ENCODE measurements at regions of chr6 and their contacts with region 1.

Region 1: DNA sequence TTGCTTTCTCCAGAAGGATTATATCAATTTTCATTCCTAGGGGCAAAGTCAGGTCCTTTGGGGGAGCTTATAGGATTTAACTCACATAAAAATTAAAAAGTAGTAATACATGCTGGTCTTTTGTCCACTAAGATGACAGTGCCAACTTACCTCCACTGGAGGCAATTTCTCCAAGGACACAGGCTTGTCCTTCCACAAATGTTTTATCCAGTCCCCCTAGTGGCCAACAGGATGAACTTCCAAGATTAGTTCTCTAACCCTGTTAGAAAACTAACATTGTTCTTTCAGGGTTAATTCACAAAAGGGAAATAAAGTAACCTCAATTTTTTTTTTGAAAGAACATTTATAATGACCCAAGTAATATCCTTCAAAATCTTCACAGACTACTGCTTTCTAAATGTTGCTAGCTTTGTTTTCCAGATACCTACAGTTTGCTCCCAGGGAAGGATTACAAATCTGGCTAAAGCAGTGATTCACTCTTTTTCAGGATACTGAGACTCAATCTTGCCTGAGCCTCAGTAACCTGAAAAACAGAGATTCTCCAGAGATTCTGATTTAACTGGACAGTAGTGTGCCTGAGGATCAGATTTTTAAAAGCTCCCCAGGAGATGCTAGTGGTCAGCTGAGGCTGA is 31.7 kb upstream of the UBR2 start:
- H3K4me3 ChIP-seq: no peak overlapping the region
- H3K27ac ChIP-seq: no peak overlapping the region
- H3K4me1 ChIP-seq: no peaks in the 10 kb centered on the region
- CTCF ChIP-seq: peak; percentile 42; the same call in 1 of the 2 replicates

Region 2: GRCh38 chr6:42302411-42302810 is 229.7 kb before region 1 on chr6:
- CTCF ChIA-PET with region 1: interaction called, 10 read pairs
- POLR2A ChIA-PET with region 1: no interaction called
- H3K4me3 ChIP-seq: no peak overlapping the region
- H3K27ac ChIP-seq: no peak overlapping the region
- H3K4me1 ChIP-seq: no peaks in the 10 kb centered on the region
- CTCF ChIP-seq: no peak

Region 3: DNA sequence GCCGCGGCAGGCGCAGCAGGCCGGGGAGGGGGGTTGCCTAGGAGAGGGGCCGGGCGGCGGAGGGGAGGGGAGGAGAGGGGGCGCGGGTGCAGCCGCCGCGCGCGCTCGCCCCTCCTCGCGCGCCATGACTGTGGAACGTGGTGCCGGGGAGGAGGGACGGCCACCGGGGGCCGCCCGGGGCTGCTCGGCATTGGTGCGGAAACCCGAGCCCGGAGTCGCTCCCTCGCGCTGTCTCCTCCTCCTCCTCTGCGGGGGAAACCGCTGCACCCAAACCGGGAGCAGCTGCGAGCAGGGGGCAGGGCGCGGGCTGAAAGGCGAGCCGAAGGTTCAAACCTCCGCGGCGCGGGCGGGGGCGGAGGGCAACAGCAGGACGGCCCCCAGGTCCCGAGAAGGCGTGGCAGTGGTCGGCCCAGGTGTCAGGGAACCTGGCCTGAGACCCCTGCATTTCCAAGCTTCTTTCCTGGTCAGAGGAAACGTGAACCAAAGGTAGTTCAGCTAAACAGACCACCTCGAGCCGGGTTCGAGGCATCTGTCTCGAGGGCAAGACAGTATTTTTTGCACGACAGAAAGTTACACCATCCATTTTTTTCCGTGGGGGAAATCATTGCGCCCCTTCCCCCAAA is 79.0 kb before region 1 on chr6:
- CTCF ChIA-PET with region 1: interaction called, 11 read pairs
- POLR2A ChIA-PET with region 1: interaction called, 3 read pairs
- H3K4me3 ChIP-seq: peak overlapping the region; percentile 60
- H3K27ac ChIP-seq: peak overlapping the region; percentile 99
- H3K4me1 ChIP-seq: peaks cover 26% of the 10 kb centered on the region
- CTCF ChIP-seq: no peak

Region 4: DNA sequence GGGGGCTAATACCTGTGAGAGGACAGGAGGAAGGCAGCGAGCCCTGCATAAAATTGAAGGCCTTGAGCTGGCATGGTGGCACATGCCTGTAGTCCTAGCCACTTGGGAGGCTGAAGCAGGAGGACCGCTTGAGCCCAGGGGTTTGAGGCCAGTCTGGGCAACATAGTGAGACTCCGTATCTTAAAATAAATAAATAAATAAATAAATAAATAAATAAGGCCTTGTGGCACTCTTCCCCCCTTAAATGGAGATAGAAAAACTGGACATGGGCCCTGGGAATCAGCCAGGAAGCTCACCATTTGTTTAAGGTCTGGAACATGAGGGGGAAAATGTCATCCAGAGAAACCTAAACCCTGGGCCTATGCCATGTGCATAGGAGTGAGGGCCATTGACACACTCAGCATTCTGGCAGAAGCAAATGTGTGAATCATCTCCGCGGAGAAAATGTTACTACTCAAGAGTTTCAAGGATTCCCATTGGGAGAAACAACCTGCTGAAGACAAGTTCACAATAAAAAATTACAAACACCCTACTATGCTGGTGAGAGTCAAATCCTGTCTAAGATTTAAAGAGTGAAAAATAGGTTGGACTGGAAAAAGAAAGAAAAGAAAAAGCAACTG is 20.2 kb before region 1 on chr6:
- CTCF ChIA-PET with region 1: interaction called, 47 read pairs
- POLR2A ChIA-PET with region 1: no interaction called
- H3K4me3 ChIP-seq: no peak overlapping the region
- H3K27ac ChIP-seq: no peak overlapping the region
- H3K4me1 ChIP-seq: no peaks in the 10 kb centered on the region
- CTCF ChIP-seq: no peak

Region 5: DNA sequence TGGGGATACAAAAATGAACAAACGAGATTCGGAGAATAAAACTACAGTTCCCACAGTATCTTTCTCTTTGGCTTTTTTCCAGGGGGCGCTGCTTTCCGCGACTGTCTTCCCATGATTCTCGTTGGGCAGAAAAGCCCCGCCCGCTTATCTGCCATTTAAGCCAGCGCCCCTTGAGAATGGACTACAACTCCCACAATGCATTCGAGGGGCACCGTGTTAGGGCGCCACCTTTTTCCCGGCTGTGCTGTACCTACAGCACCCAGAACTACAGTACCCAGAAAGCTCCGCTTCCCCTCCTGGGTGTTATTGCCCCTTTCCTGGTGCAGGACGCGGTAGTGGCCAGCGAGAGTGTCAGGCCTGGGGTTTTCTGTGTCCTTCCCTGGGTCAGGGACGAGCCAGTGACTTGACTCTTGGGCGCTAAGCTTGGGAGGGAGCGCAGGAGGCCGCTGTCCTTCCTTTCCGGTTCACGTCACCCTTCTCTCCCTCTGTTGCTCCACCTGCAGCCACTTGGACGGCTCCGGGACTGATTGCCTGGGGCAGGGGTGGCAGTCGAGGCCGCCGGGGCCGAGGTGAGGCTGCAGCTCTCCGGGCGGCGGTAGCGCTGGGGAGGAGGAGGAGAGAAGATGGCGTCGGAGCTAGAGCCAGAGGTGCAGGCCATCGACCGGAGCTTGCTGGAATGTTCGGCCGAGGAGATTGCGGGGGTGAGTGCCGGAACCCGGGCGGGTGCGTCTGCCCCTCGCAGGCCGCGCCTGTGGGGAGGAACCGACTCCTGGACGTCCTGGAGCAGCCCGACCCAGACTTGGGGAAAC is 31.7 kb after region 1 on chr6 and contains the start of gene UBR2:
- CTCF ChIA-PET with region 1: interaction called, 10 read pairs
- POLR2A ChIA-PET with region 1: interaction called, 3 read pairs
- H3K4me3 ChIP-seq: peak within 1 kb of the TSS; percentile 82
- H3K27ac ChIP-seq: peak within 1 kb of the TSS; percentile 59
- H3K4me1 ChIP-seq: no peaks in the 10 kb centered on the region
- CTCF ChIP-seq: peak; percentile 96